H1 (cell line): ENCODE measurements at regions of chr5 and their contacts with region 1.

Region 1: DNA sequence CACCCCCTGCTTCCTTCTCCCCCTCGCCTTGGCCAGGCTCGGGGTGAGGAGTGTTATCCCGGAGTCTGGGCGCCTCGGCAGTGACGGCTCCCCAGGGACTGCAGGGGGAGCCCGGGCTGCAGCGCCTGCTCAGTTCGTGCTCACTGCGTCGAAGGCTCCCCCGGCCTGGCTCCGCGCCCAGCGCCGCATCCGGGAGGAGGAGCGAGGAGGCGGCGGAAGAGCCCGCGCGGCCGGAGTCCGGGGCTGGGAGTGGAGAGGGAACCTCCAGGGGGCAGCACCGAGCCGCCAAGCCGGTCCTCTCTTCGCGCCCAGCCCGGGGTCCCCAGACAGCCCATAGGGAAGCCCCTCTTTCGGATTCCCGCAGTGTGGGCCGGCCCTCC is 1.3 kb upstream of the EGR1 start:
- DNase-seq: peak in 1 of 2 experiments; percentile 98
- H3K4me3 ChIP-seq: peak overlapping the region; percentile 81 to 90 (median 88)
- H3K27ac ChIP-seq: peak overlapping the region; percentile 90; the same call in 1 of the 2 replicates
- H3K4me1 ChIP-seq: peaks cover 0 to 11% (median 7%) of the 10 kb centered on the region in 4 experiments; a peak in 6 of 7 replicates
- H3K27me3 ChIP-seq: peaks cover 0 to 15% (median 13%) of the 10 kb centered on the region in 4 experiments; a peak in 5 of 7 replicates
- CTCF ChIP-seq: peak in 2 of 3 experiments; percentile 71 to 73; a peak in 3 of 4 replicates
- EP300 ChIP-seq: peak; percentile 3 to 87; a peak in 2 of 3 replicates
- POLR2A ChIP-seq: no peak; a peak in 1 of 3 replicates
- RAD21 ChIP-seq: peak; percentile 28 to 59; a peak in 3 of 4 replicates

Region 2: GRCh38 chr5:138316355-138316754 is 147.6 kb before region 1 on chr5:
- CTCF ChIA-PET with region 1: no interaction called
- POLR2A ChIA-PET with region 1: no interaction called
- DNase-seq: no peak
- H3K4me3 ChIP-seq: no peak overlapping the region
- H3K27ac ChIP-seq: no peak overlapping the region
- H3K4me1 ChIP-seq: no peaks in the 10 kb centered on the region
- H3K27me3 ChIP-seq: no peaks in the 10 kb centered on the region
- CTCF ChIP-seq: no peak
- EP300 ChIP-seq: no peak
- POLR2A ChIP-seq: no peak
- RAD21 ChIP-seq: no peak

Region 3: DNA sequence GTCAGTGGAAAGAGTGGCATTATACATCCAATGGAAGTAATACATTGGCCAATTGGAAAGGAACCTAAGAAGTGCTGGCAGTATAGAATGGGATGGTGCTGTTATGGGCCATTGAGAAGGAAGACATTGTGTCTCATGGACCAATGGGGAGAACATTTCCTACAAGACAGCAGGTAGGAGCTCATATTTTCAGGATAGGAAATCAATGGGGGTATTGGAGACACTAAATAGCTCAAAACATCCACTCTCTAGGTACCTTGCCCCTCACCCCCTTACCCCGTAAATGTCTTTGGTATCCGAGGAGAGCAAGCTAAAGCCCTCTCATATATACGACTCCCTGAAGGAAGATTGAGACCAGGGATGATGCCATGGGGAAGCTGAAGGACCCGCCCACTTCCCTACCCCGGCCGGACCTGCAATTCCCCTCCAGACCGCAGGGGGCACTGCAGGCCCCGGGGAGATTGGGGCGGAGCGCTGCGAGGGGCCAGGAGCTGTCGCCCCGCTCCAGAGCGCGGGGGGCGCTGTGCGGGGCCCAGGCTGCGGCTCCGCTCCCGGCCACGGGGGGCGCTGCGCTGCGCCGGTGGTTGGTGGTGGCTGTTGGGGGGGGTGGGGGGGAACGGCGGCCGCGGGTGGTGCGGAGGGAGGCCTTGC is 111.8 kb before region 1 on chr5 and contains the start of gene KDM3B:
- CTCF ChIA-PET with region 1: interaction called, 7 read pairs
- POLR2A ChIA-PET with region 1: interaction called, 11 read pairs
- DNase-seq: peak; percentile 83 to 100
- H3K4me3 ChIP-seq: peak within 1 kb of the TSS; percentile 58 to 97 (median 95)
- H3K27ac ChIP-seq: peak within 1 kb of the TSS; percentile 82
- H3K4me1 ChIP-seq: peaks cover 0 to 9% (median 3%) of the 10 kb centered on the region in 4 experiments; a peak in 3 of 7 replicates
- H3K27me3 ChIP-seq: no peaks in the 10 kb centered on the region
- CTCF ChIP-seq: peak; percentile 99 to 100 (median 99)
- EP300 ChIP-seq: peak; percentile 17 to 29; a peak in 1 of 3 replicates
- POLR2A ChIP-seq: peak in 1 of 2 experiments; percentile 23; a peak in 1 of 3 replicates
- RAD21 ChIP-seq: peak; percentile 25 to 47; a peak in 3 of 4 replicates
- total RNA-seq, gene KDM3B: 78.1 and 79.7 TPM in 2 replicates

Region 4: GRCh38 chr5:138449501-138450239 is 14.3 kb before region 1 on chr5:
- CTCF ChIA-PET with region 1: interaction called, 215 read pairs
- POLR2A ChIA-PET with region 1: interaction called, 128 read pairs
- DNase-seq: peak in 1 of 2 experiments; percentile 99
- H3K4me3 ChIP-seq: peak overlapping the region in 1 of 4 experiments; percentile 27; a peak in 1 of 8 replicates
- H3K27ac ChIP-seq: no peak overlapping the region
- H3K4me1 ChIP-seq: peaks cover 0 to 15% (median 7%) of the 10 kb centered on the region in 4 experiments; a peak in 5 of 7 replicates
- H3K27me3 ChIP-seq: peaks cover 0 to 1% (median 0%) of the 10 kb centered on the region in 4 experiments; a peak in 1 of 7 replicates
- CTCF ChIP-seq: peak in 2 of 3 experiments; percentile 95 to 97; a peak in 3 of 4 replicates
- EP300 ChIP-seq: no peak
- POLR2A ChIP-seq: no peak
- RAD21 ChIP-seq: peak; percentile 83 to 88

Region 5: DNA sequence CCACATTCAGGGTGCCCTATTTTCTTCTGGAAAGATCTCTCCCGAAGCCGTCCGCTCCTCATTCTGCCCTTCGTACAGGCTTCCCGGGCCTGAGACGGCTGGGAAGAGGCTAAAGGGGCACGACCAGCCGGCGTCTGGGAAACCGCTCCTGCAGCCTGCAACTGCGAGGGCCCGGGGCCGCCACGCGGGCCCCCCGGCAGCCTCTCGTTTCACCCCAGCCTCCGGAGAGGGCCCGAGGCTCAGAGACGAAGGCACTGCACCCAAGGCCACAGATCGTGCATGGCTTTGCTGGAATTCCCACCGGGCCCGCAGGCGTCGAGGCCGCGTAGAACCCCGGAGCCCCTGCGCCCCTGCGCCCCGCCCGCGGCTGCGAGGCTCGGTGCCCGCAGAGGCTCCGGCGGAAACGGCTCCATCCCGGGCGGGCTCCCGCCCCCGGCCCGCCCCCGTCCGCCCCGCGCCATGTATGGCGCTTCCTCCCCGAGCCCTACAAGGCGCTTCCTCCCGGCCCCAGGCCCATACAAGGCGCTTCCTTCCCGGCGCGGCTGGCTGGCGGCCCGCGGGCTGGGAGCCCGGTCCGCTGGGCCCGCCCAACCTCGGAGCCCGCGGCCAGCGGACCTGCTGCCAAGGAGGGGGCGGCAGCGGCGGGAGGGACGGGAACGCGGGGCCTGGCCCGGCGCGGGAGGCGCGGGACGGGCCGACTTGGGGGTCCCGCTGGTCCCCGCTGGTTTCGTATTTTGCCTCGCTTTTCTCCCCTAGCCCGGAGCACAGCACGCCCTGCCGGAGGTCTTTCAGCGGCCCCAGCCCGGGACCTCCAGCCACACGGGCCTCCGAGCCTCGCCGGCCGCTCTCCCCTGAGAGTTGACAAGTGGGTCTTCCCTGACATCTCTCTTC is 27.9 kb after region 1 on chr5:
- CTCF ChIA-PET with region 1: interaction called, 532 read pairs
- POLR2A ChIA-PET with region 1: interaction called, 294 read pairs
- DNase-seq: peak in 1 of 2 experiments; percentile 82
- H3K4me3 ChIP-seq: peak overlapping the region; percentile 40 to 63 (median 53)
- H3K27ac ChIP-seq: no peak overlapping the region; the same call in 1 of the 2 replicates
- H3K4me1 ChIP-seq: peaks cover 3 to 21% (median 13%) of the 10 kb centered on the region in 4 experiments
- H3K27me3 ChIP-seq: peaks cover 0 to 21% (median 17%) of the 10 kb centered on the region in 4 experiments; a peak in 5 of 7 replicates
- CTCF ChIP-seq: no peak
- EP300 ChIP-seq: no peak
- POLR2A ChIP-seq: 0 out of 3 replicates have a peak, but pooled peaks of 1 of the 2 experiments have one; percentile 41
- RAD21 ChIP-seq: no peak

Region 6: DNA sequence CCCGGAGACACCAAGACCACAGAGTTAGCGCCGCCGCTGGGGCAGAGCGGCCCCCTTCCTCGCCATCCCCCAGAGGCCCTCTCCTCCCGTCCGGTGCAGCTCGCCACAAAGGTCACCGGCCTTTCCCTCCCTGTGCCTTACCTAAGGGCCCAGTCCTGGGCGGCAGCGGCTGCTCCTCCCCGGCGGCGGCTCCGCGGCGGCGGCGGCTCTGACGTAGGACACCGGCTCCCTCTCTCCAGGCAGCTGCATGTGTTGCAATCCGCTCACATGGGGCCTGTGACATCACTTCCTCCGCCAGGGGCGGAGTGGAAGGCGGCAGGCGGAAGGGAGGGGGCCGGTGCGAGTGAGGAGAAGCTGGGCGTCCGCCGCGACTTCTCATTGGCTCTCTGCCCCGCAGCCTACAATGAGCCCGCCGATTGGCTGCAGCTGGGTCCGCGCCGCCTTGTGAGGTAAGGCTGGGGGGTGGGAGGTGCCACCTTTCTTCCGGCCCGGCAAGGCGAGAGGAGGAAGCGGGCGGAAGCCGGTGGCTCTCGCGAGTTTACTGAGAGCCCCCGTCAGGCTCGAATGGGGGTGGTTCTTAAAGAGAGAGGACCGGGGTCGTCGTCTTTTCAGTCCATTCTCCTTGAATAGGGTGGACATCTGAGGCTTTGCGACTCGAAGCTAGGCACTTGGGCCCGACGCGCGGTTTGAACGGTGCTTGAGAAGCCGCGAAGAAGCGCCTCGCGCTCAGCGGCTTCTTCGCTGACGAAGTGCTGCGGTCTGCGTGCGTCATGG is 79.1 kb after region 1 on chr5 and contains the start of gene ETF1:
- CTCF ChIA-PET with region 1: interaction called, 15 read pairs
- POLR2A ChIA-PET with region 1: interaction called, 59 read pairs
- DNase-seq: peak; percentile 98
- H3K4me3 ChIP-seq: peak within 1 kb of the TSS; percentile 89 to 100 (median 95)
- H3K27ac ChIP-seq: peak within 1 kb of the TSS; percentile 100
- H3K4me1 ChIP-seq: peaks cover 0 to 16% (median 2%) of the 10 kb centered on the region in 4 experiments; a peak in 4 of 7 replicates
- H3K27me3 ChIP-seq: no peaks in the 10 kb centered on the region
- CTCF ChIP-seq: no peak
- EP300 ChIP-seq: peak in 1 of 2 experiments; percentile 72; a peak in 2 of 3 replicates
- POLR2A ChIP-seq: peak; percentile 77 to 82
- RAD21 ChIP-seq: no peak
- total RNA-seq, gene ETF1: 168 TPM in 2 replicates

Region 7: DNA sequence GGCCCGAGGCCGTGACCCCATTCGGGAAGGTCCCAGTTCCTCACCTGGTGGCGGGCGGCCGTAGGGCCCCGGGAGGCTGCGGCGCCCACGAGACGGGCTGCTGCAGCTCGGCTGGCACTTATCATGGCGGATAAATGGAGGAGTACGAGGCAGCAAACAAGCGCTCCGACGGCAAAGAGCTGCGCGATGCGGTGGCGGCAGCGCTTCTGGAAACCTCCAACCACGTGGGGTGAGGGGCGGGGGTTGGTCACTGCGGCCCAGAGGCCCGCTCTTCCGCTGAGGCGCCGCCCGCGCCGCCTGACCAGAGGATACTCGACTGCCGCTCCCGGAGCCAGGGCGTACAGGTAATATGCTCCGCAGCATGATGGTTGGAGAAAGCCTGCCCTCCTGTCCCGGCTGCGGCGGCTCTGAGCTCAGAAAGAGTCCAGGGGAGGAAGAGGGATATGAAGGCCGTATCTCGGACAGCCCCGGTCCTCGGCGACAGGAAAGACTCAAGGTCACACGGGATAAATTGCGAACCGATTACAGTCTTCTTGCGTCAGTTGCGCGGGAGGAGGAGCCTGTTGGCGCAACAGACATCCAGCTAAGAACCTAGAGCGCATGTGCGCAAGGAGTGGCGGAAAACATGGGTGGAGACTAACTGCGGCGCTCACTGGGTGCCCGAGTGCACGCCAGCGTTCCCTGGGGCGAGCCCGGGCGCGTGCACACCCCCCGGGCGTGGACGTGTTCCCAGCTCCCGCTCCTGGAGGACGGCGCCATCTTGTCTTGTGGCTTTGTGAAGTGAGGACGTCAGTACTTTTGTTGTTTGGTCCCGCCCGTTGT is 111.4 kb after region 1 on chr5 and contains the start of gene HSPA9:
- CTCF ChIA-PET with region 1: interaction called, 3 read pairs
- POLR2A ChIA-PET with region 1: interaction called, 29 read pairs
- DNase-seq: peak; percentile 95 to 97
- H3K4me3 ChIP-seq: peak within 1 kb of the TSS; percentile 82 to 98 (median 92)
- H3K27ac ChIP-seq: peak within 1 kb of the TSS; percentile 100
- H3K4me1 ChIP-seq: peaks cover 0 to 3% (median 0%) of the 10 kb centered on the region in 4 experiments; a peak in 3 of 7 replicates
- H3K27me3 ChIP-seq: no peaks in the 10 kb centered on the region
- CTCF ChIP-seq: no peak
- EP300 ChIP-seq: peak in 1 of 2 experiments; percentile 30; a peak in 1 of 3 replicates
- POLR2A ChIP-seq: peak; percentile 80 to 87
- RAD21 ChIP-seq: no peak
- total RNA-seq, gene HSPA9: 395 and 396 TPM in 2 replicates